GM10248 (cell line): ENCODE measurements at regions of chr12 and their contacts with region 1.

Region 1: DNA sequence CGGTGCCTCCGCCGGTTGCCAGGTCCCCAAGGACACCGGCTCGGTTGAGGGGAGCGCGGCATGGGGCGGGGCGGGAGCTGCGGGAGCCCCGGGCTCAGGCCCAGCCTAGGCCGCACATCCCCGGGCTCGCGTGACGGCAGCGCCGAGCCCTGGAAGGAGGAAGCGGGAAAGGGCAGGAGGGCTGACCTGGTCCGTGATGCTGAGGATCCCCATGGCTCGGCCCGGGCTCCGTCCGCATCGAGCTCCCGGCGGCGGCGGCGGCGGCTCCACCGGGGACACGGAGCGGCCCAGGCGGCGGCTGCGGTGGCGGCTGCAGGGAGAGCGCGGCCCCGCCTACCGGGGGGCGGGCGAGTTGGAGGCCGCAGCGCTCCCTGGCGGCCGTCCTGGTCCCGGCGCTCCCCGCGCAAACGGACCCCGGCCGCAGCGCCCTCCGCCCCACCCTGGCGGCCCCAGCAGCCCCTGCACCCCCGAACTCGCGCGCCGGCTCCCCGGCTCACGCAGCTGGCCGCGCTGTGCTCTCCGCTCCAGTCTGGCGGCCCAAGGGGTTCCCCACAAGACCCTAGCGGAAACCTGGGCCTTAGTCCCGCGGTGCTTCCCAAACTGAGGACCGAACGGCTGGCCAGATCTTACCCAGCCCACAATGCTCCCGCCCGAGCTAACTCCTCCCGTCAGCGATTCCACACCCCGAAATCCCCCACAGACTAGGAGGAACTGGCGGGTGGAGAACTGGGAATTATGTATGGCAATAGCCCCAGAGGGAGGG is at the start of gene ANKRD52:
- DNase-seq: peak; percentile 96
- CTCF ChIP-seq: peak; percentile 88

Region 2: DNA sequence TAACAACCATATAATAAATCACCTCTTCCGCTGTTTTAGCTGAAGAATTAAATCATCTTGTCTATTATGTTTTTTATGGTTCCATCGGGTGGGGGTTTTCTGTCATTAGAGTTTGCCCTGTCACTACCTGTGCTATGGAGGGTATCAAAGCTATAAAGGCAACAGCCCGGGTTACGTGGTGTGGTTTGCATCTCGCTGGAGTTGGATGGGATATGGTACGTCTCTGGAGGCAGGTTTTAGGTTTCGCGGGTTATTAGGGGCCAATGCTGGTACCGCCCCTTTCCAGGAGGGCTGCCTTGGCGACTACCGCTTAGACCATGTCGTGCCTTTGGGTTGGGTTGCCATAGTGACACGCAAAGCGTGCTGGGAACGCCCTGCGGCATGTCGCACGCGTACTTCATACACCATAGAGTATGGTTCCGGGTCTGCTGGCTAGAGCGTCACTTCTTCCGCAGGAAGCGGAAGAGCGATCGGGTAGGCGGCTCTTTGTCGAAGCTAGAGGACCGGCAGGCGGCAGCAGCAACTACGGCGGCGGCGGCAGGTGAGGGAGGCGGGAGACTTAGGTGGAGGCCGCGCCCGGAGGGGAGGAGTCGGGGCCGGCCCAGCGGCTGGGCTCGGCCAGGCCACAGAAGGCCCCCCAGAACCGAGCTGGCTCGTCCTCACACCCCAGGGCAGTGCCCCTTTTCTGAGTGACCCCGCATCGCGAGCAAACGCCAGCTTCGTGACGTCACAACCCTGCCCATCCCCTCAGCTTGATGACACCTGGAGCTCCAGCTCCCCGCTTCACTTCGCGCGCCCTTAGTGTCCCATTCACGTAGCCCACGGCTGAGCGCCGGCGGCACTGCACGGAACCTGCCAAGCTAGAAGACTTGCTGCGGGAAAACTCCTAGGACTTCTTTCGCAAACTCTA is 140.2 kb before region 1 on chr12 and contains the start of gene ZC3H10:
- CTCF ChIA-PET with region 1: interaction called, 19 read pairs
- POLR2A ChIA-PET with region 1: interaction called, 4 read pairs
- DNase-seq: peak; percentile 93
- CTCF ChIP-seq: peak; percentile 62

Region 3: DNA sequence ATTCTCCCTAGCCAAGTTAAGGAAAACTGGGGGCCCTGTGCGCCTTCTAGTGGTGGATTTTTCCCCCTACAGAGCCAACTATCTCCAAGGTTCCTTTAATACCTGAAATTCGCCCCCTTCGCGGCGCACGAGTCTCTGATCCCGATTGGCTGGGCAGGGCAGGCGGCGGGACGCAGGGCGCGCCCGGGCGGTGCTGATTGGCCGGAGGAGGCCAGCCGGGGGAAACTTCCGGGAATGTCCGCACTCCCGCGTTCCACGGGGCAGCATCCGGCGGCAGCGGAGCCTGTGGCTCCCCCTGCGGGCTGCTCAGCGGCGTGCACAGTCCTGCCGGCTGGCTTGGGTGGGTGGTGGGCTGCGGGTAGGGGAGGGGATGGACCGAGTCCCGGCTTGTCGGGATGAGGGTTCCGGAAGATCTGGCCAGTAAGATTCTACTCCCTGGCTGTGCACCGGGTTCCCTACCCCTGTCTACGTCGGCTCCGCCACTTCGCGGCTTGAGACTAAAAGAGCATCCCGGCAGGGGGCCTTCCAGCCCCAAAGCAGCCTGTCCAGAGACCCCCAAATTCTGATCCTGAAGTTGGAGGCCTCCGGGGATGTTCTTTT is 34.0 kb before region 1 on chr12 and contains the start of gene NABP2:
- CTCF ChIA-PET with region 1: interaction called, 15 read pairs
- POLR2A ChIA-PET with region 1: no interaction called
- DNase-seq: peak; percentile 99
- CTCF ChIP-seq: peak; percentile 90

Region 4: DNA sequence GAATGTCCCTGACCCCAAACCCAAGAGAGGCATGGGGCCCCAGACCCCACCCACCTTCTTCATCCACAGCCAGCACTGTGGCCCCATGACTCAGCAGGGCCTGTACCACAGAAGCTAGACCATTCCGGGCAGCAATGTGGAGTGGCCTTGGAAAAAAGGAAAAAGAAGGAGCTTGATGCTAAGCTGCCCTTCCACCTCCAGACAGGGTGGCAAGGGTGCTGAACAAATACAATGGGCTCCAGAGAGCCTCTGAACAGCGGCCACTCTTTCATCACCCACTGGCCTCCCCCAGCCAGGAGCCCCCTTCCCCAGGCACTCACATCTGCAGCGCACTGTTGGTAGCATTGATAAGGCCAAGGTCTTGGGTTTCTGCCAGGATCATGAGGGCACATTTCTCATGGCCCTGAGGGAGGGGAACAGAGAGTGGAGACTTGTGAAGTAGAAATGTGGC is 14.5 kb before region 1 on chr12:
- CTCF ChIA-PET with region 1: interaction called, 53 read pairs
- POLR2A ChIA-PET with region 1: no interaction called
- DNase-seq: no peak
- CTCF ChIP-seq: no peak

Region 5: DNA sequence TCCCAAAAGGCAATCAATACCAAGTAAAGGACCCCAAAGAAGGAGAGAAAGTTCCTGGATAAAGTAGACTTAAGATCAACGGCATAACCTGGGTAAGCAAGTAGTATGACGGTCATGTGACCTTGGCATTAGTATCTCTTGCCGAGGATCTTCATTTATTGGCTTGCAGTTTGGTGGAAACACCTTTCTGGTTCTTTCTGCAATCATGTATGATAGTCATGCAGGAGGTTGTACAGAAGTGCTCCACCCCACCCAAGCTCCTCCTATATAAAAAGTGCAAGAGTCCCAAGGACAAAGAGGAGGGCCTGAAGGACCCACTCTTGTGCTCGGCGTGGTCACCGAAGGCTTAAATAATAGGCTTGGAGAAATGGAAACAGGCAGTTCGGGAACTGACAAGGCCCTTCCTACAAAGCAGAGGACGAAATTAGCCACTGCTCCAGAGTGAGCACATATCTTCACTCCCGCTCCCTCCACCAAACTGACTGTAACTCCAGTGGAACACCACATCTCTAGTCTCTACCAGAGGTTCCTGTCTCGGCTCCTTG is 41.1 kb after region 1 on chr12:
- CTCF ChIA-PET with region 1: interaction called, 10 read pairs
- POLR2A ChIA-PET with region 1: no interaction called
- DNase-seq: no peak
- CTCF ChIP-seq: no peak